Activated CD4-positive, alpha-beta memory T cell treated with anti-CD3 and anti-CD28 coated beads for 36 hours (primary cell): ENCODE measurements at regions of chr3 and their contacts with region 1.

Region 1: GRCh38 chr3:101518421-101518871 is 5.4 kb upstream of the SENP7 start:
- DNase-seq: peak; percentile 69
- H3K4me3 Mint-ChIP-seq: peak overlapping the region; percentile 65
- H3K27ac Mint-ChIP-seq: peak overlapping the region; percentile 93
- H3K4me1 Mint-ChIP-seq: peaks cover 48% of the 10 kb centered on the region
- H3K27me3 Mint-ChIP-seq: no peaks in the 10 kb centered on the region

Region 2: GRCh38 chr3:100708967-100709841 is 809.2 kb before region 1 on chr3 and contains the start of gene TFG:
- CTCF ChIA-PET with region 1: no interaction called
- POLR2A ChIA-PET with region 1: no interaction called
- intact Hi-C with region 1: loop called (anchors 2 kb)
- DNase-seq: peak; percentile 98
- H3K4me3 Mint-ChIP-seq: peak within 1 kb of the TSS; percentile 81
- H3K27ac Mint-ChIP-seq: peak within 1 kb of the TSS; percentile 95
- H3K4me1 Mint-ChIP-seq: peaks cover 40% of the 10 kb centered on the region
- H3K27me3 Mint-ChIP-seq: peaks cover 9% of the 10 kb centered on the region
- total RNA-seq, gene TFG: 55.5 to 60.3 TPM

Region 3: GRCh38 chr3:101531473-101532086 is 13.1 kb after region 1 on chr3:
- CTCF ChIA-PET with region 1: interaction called, 5 read pairs
- POLR2A ChIA-PET with region 1: interaction called, 8 read pairs
- intact Hi-C with region 1: loop called (anchors 1 kb)
- DNase-seq: peak; percentile 16
- H3K4me3 Mint-ChIP-seq: no peak overlapping the region
- H3K27ac Mint-ChIP-seq: peak overlapping the region; percentile 53
- H3K4me1 Mint-ChIP-seq: peaks cover 34% of the 10 kb centered on the region
- H3K27me3 Mint-ChIP-seq: no peaks in the 10 kb centered on the region

Region 4: DNA sequence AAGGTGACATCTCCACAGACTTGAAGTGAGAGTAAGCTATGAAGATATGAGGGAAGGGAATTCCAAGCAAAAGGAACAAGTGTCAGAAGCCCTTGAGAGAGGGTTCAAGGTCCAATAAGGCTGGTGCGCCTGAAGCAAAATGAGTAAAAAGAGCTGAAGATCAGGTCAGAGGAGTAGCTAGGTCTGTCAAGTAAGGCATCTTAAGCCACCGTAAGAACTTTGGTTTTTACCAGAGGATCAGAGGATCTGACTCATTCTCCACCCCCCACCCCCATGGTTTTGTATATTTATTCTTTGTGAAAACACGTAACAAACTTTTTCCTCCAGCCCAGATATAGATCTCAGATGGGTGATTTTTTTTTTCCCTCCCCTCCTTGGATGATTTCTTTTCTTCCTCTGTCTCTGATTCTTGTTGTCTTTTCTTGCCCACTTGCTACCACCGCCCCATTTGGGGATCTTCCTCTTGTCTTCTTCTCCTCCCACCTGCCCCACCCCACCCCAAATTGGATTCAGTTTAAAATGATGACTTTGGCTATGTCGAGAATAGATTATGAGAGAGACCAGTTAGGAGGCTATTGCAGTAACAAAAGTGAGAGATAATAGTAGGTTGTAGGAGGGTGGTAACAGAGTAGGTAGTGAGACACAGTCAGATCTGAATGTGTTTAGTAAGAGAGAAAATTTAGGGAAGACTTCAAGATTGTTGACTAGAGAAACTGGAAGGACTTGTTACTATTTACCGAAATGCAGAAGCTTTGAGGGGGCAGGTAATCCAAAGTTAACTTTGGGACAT is 49.3 kb after region 1 on chr3:
- CTCF ChIA-PET with region 1: interaction called, 4 read pairs
- POLR2A ChIA-PET with region 1: interaction called, 18 read pairs
- intact Hi-C with region 1: loop called (anchors 1 kb)
- DNase-seq: peak; percentile 74
- H3K4me3 Mint-ChIP-seq: peak overlapping the region; percentile 41
- H3K27ac Mint-ChIP-seq: peak overlapping the region; percentile 93
- H3K4me1 Mint-ChIP-seq: peaks cover 80% of the 10 kb centered on the region
- H3K27me3 Mint-ChIP-seq: no peaks in the 10 kb centered on the region

Region 5: DNA sequence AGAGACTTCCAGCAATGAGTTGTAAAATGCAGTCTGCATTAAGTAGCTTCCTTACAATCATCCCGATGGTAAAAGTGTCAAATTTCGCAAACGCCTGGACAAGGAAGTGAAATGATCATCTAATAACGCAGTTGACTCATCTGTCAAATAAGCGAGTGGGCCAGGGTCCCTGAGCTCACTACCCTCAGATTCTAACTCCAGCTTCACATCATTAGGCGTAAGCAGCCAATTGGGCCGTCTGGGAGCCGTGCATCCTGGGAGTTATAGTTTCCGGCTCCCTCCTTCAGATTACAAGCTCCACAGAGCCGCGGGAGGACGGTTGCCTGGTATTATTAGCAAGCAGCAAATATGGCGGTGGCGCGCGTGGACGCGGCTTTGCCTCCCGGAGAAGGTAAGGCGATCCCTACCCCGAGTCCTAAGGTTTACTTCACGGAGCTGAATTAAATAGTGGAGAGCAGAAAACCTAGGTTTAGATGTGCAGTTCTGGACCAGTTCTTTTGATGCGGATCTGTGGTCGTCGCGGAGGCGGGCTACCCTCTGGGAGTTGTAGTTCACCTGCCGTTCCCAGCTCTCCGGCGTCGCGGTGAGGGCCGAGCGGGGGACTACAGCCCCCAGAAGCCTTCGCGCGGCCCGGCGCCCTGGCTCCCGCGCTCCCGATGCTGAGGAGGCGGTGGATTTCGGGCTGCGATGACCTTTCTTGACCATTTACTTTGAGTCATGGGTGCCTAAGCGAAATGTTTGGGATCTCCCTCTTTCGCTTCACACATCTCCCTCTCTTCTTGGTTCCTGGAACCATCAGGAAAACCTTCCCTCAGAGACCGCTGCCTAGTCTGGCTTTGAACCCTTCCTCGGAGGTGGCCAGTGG is 206.1 kb after region 1 on chr3 and contains the start of gene CEP97:
- CTCF ChIA-PET with region 1: no interaction called
- POLR2A ChIA-PET with region 1: no interaction called
- intact Hi-C with region 1: loop called (anchors 2 kb)
- DNase-seq: peak; percentile 92
- H3K4me3 Mint-ChIP-seq: peak within 1 kb of the TSS; percentile 99
- H3K27ac Mint-ChIP-seq: peak within 1 kb of the TSS; percentile 99
- H3K4me1 Mint-ChIP-seq: peaks cover 46% of the 10 kb centered on the region
- H3K27me3 Mint-ChIP-seq: no peaks in the 10 kb centered on the region
- total RNA-seq, gene CEP97: 16.6 to 17.9 TPM

Region 6: GRCh38 chr3:102605153-102605552 is 1086.7 kb after region 1 on chr3:
- CTCF ChIA-PET with region 1: no interaction called
- POLR2A ChIA-PET with region 1: no interaction called
- intact Hi-C with region 1: no loop called
- DNase-seq: no peak
- H3K4me3 Mint-ChIP-seq: no peak overlapping the region
- H3K27ac Mint-ChIP-seq: no peak overlapping the region
- H3K4me1 Mint-ChIP-seq: no peaks in the 10 kb centered on the region
- H3K27me3 Mint-ChIP-seq: peaks cover 1% of the 10 kb centered on the region